ENCODE measurements at regions of chr5 and their contacts with region 1.

Region 1: GRCh38 chr5:140806834-140807775 is at the start of gene PCDHA4:
- DNase-seq: peak; percentile 42
- H3K4me3 ChIP-seq: no peak within 1 kb of the TSS
- H3K27ac ChIP-seq: no peak within 1 kb of the TSS
- H3K4me1 ChIP-seq: no peaks in the 10 kb centered on the region
- H3K27me3 ChIP-seq: no peaks in the 10 kb centered on the region
- CTCF ChIP-seq: peak in 1 of 2 donors; percentile 11
- total RNA-seq, gene PCDHA4: 0.45 to 0.83 TPM

Region 2: DNA sequence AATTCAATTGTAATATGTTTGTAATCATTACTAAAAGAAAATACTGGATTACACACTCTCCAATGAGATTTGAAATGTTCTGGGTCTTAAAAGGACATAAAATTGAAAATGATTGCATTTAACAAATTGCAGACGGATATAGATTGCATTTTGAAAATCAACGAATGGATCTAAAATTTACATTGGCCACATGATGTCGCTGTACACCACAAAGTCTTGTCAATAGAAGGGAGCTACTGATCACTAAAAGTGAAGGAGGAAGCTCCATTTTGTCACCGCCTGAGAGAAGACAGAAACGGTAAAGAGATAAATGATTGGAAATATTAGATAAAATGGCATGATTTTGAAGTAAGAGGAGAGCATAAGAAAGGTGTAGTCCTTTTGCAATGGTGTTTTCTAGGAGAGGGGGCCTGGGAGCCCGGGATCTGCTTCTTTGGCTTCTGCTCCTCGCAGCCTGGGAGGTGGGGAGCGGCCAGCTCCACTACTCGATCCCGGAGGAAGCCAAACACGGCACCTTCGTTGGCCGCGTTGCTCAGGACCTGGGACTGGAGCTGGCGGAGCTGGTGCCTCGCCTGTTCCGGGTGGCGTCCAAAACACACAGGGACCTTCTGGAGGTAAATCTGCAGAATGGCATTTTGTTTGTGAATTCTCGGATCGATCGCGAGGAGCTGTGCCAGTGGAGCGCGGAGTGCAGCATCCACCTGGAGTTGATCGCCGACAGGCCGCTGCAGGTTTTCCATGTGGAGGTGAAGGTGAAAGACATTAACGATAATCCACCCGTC is 21.0 kb before region 1 on chr5 and contains the start of gene PCDHA1:
- CTCF ChIA-PET with region 1: interaction called, 10 read pairs
- dilution Hi-C with region 1: no loop called
- in situ Hi-C with region 1: no loop called
- intact Hi-C with region 1: no loop called
- DNase-seq: no peak
- H3K4me3 ChIP-seq: no peak within 1 kb of the TSS
- H3K27ac ChIP-seq: no peak within 1 kb of the TSS
- H3K4me1 ChIP-seq: no peaks in the 10 kb centered on the region
- H3K27me3 ChIP-seq: no peaks in the 10 kb centered on the region
- CTCF ChIP-seq: peak in 1 of 2 donors; percentile 1
- total RNA-seq, gene PCDHA1: 0.26 TPM in 1 of 2 donors, not detected in the other